Activated T-helper 2 cell treated with anti-CD3 and anti-CD28 coated beads, Interferon-gamma antibody, Interleukin-2, Interleukin-4, amounts not matched to agents 10 μg/mL and 5 μg/mL and 100 μg/mL, durations not matched to agents 14 hours and 24 hours and 36 hours (primary cell): ENCODE measurements at regions of chr11 and their contacts with region 1.

Region 1: DNA sequence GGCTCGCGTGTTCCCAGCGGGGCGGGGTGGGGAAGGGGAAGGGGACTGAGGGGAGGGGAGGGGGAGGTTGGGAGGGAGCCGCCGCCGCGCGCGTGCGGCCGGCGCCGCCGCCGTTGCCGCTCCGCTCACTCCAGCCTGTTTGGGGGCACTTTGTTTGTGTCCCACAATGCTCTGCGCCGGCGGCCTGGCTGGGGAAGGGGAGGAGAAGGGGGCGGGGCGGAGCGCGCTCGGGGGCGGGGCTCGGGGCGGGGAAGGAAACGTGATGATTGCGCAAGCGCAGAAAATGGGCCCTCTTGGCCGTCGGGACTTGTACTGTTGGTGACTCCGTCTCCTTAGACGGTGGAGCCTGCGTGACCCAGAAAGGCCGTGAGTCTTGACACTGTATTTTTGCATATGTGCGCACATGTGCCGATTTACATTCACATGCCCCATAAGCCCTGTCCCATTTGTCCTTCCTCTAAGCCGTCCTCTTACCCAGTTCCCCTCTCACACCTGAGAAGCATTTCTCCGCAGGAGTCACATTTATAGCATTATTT is at the start of gene ZBTB44:
- DNase-seq: peak; percentile 84
- H3K4me3 Mint-ChIP-seq: peak within 1 kb of the TSS; percentile 95
- H3K27ac Mint-ChIP-seq: peak within 1 kb of the TSS; percentile 94
- H3K4me1 Mint-ChIP-seq: peaks cover 48% of the 10 kb centered on the region
- H3K27me3 Mint-ChIP-seq: no peaks in the 10 kb centered on the region
- total RNA-seq, gene ZBTB44: 36.0 and 36.1 TPM in 2 replicates

Region 2: DNA sequence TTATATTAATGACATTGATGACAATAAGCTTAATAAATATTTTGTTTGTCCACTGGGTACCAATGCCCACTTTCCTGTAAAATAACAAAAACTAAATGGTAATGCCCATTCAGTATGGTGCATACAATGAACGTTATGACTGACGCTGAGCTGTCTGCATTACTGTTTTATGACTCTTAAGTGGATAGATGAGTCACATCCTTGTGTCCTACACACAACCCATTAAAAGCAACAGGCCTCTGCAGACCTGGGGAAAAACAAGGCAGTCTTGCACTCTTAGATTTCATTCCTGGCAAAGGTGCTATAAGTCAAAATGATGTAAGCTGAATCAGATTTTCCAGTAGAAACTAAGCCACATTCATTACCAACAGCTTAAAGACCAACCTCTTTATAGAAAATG is 675.5 kb before region 1 on chr11:
- intact Hi-C with region 1: loop called (anchors 10 kb)
- DNase-seq: no peak
- H3K4me3 Mint-ChIP-seq: no peak overlapping the region
- H3K27ac Mint-ChIP-seq: peak overlapping the region; percentile 85
- H3K4me1 Mint-ChIP-seq: peaks cover 68% of the 10 kb centered on the region
- H3K27me3 Mint-ChIP-seq: no peaks in the 10 kb centered on the region

Region 3: DNA sequence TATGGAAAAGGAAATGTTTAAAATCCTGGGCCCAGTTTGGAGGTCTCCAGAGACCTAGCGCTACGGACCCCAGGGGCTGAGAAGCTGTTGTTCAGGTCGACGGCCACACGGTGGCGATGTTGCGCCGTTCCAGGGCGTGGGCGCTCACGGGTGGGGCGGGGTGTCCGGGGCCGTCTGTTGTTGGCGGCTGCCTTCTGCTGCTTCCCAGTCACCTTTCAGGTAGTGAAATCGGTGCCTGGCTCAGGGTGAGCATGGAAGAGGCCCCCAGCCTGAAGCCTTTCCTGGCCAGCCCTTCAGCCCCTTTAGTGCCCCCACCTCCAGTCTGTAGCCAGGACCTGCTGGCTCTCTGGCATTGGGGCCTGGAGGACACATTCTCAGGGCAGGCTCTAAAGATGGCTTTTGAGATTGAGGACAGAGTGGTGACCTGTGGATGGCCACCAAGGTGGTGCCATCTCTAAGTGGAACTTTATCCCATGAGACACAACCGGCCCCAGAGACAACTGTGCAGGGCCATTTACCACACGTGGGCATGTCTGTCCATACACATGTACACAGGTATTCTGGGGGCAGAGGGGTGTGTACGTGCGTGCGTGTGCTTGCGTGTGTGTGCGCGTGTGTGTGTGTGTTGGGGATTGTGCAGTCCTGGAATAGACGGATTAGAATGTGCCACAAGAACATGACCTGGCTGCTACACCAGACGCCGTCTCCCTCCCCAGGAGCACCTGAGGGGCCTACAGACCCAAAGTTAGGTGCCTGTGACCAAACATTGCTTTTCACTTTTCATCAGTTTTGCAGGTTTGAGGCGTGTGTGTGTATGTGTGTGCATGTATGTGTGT is 101.5 kb before region 1 on chr11:
- intact Hi-C with region 1: loop called (anchors 5 kb)
- DNase-seq: peak; percentile 56
- H3K4me3 Mint-ChIP-seq: no peak overlapping the region
- H3K27ac Mint-ChIP-seq: no peak overlapping the region
- H3K4me1 Mint-ChIP-seq: no peaks in the 10 kb centered on the region
- H3K27me3 Mint-ChIP-seq: no peaks in the 10 kb centered on the region

Region 4: DNA sequence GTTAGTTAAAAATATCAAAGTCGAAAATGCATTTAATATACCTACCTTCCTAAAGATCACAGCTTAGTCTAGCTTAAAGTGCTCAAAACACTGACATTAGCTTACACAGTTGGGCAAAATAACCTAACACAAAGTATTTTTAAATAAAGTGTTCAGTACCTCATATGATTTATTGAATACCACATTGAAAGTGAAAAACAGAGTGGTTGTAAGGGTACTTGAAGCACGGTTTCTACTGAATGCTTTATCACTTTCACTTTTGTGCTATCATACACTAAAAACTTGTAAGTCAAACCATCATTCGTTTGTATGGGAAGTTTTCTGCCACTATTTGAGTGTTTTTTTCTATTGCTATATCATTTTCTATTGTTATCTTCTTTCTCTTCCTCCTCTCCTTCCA is 36.7 kb before region 1 on chr11:
- intact Hi-C with region 1: loop called (anchors 1 kb)
- DNase-seq: no peak
- H3K4me3 Mint-ChIP-seq: peak overlapping the region; percentile 23
- H3K27ac Mint-ChIP-seq: peak overlapping the region; percentile 64
- H3K4me1 Mint-ChIP-seq: peaks cover 32% of the 10 kb centered on the region
- H3K27me3 Mint-ChIP-seq: no peaks in the 10 kb centered on the region

Region 5: DNA sequence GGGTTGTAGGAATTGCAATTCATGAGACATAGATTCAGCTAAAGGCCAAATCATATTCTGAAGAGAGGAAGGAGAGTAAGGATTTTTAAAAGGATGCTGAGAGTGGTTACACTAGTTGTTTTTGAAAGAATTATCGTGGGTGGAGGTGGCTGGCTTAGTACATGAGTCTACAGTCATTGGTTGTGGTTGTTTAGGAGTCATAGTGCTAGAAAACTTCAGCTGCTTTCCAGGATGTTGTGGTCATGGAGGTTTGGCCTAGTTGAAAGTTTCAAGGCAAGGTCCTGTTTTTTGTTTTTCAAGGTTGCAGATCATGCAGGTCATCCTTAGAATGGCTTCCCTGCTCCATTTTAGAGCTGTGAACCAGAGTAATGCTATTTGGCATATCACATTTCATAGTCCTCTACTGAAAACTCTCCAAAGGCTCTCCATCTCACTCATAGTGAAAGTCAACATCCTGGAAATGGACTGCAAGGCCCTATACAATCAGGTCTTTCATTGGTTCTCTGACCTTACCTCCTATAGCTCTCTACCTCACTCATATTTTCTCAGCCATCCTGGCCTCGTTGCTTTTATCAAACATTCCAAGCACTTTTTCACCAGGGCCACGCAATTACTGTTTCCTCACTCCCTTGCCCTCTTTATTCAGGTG is 26.0 kb after region 1 on chr11:
- intact Hi-C with region 1: loop called (anchors 1 kb)
- DNase-seq: peak; percentile 20
- H3K4me3 Mint-ChIP-seq: no peak overlapping the region
- H3K27ac Mint-ChIP-seq: peak overlapping the region; percentile 71
- H3K4me1 Mint-ChIP-seq: peaks cover 13% of the 10 kb centered on the region
- H3K27me3 Mint-ChIP-seq: peaks cover 1% of the 10 kb centered on the region